ENCODE measurements at regions of chrX and their contacts with region 1.

Region 1: DNA sequence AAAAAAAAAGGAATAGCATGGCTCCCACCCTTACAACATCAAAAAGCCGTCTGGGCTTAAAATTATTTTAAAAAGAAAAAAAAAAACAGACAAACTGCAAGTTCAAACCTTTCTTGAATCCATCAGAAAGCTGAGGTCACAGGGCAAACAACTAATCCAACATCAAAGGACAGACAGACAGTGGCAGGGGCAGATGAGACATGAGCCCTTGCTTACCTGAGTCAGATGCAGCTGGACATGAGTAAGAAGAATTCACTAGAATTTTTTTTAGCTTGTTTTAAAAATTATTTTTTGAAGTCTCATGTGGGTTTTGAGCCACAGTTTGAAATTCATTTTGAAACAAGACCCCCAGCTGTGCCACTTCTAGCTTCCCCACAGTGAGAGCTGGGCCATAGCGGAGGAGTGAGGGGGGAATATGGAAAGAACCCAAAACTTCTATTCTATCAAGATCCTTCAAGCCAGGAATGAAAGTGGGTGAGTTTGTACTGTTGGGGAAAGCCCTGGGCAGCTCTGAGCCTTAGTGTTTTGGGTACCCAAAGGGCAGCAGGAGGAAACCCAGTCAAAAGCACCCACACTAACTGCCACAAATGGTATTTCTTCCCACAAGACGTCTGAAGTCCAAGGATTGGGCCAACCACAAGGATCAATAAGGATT is 111.4 kb downstream of the ATXN3L start:
- DNase-seq: no peak
- ATAC-seq: no peak
- H3K4me3 ChIP-seq: no peak overlapping the region
- H3K4me3 Mint-ChIP-seq: no peak overlapping the region
- H3K27ac ChIP-seq: no peak overlapping the region
- H3K27ac Mint-ChIP-seq: peak overlapping the region in 1 of 9 donors; percentile 36
- H3K4me1 ChIP-seq: no peaks in the 10 kb centered on the region
- H3K4me1 Mint-ChIP-seq: peaks cover 2 to 9% (median 7%) of the 10 kb centered on the region in 7 donors
- H3K27me3 ChIP-seq: no peaks in the 10 kb centered on the region
- H3K27me3 Mint-ChIP-seq: no peaks in the 10 kb centered on the region

Region 2: GRCh38 chrX:13266641-13267345 is 58.4 kb after region 1 on chrX:
- CTCF ChIA-PET with region 1: no interaction called
- POLR2A ChIA-PET with region 1: no interaction called
- intact Hi-C with region 1: loop called in 1 of 2 experiments (anchors 5 kb)
- DNase-seq: no peak
- ATAC-seq: no peak
- H3K4me3 ChIP-seq: no peak overlapping the region
- H3K4me3 Mint-ChIP-seq: no peak overlapping the region
- H3K27ac ChIP-seq: no peak overlapping the region
- H3K27ac Mint-ChIP-seq: no peak overlapping the region
- H3K4me1 ChIP-seq: no peaks in the 10 kb centered on the region
- H3K4me1 Mint-ChIP-seq: peaks cover 0 to 6% (median 0%) of the 10 kb centered on the region in 7 donors
- H3K27me3 ChIP-seq: no peaks in the 10 kb centered on the region
- H3K27me3 Mint-ChIP-seq: no peaks in the 10 kb centered on the region

Measured in naive thymus-derived CD4-positive, alpha-beta T cell (primary cell).